B cell (primary cell): ENCODE measurements at regions of chr15 and their contacts with region 1.

Region 1: GRCh38 chr15:40982855-40983254 is 29.6 kb downstream of the CHAC1 start:
- DNase-seq: no peak
- ATAC-seq: no peak
- H3K4me3 ChIP-seq: no peak overlapping the region
- H3K4me3 Mint-ChIP-seq: no peak overlapping the region
- H3K27ac ChIP-seq: no peak overlapping the region
- H3K27ac Mint-ChIP-seq: no peak overlapping the region
- H3K4me1 ChIP-seq: no peaks in the 10 kb centered on the region
- H3K4me1 Mint-ChIP-seq: no peaks in the 10 kb centered on the region
- H3K27me3 ChIP-seq: no peaks in the 10 kb centered on the region
- H3K27me3 Mint-ChIP-seq: no peaks in the 10 kb centered on the region
- CTCF ChIP-seq: no peak

Region 2: DNA sequence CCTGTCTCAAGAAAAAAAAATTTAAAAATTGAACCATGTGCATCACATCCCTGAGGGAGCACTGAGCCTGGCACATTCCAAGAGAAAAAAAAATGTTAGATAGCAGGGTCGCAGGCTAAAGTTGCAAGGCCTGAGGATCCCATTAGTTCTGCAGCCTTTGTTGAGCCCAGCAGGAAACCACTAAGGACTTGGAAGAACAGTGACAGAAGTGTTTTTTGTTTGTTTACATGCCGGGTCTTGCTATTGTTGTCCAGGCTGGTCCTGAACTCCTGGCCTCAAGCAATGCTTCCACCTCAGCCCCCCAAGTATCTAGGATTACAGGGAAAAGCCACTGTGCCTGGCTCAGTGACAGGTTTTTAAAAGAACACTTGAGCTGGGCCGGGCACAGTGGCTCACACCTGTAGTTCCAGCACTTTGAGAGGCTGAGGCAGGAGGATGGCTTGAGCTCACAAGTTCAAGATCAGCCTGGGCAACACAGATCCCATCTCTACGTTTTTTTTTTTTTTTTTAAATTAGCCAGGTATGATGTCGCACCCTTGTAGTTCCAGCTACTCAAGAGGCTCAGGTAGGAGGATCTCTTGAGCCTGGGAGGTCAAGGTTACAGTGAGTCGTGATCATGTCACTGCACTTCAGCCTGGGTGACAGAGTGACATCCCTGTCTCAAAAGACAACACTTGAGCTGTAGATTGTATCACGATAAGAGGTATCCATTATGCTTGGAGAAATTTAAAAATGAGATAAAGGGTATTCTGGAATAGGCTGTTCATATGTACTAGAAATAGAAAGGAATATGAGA is 14.4 kb before region 1 on chr15:
- CTCF ChIA-PET with region 1: no interaction called
- POLR2A ChIA-PET with region 1: no interaction called
- intact Hi-C with region 1: loop called (anchors 2 kb)
- DNase-seq: no peak
- ATAC-seq: no peak
- H3K4me3 ChIP-seq: no peak overlapping the region
- H3K4me3 Mint-ChIP-seq: no peak overlapping the region
- H3K27ac ChIP-seq: no peak overlapping the region
- H3K27ac Mint-ChIP-seq: no peak overlapping the region
- H3K4me1 ChIP-seq: no peaks in the 10 kb centered on the region
- H3K4me1 Mint-ChIP-seq: no peaks in the 10 kb centered on the region
- H3K27me3 ChIP-seq: peaks cover 0 to 3% (median 0%) of the 10 kb centered on the region in 4 experiments
- H3K27me3 Mint-ChIP-seq: peaks cover 4% of the 10 kb centered on the region
- CTCF ChIP-seq: no peak

Region 3: DNA sequence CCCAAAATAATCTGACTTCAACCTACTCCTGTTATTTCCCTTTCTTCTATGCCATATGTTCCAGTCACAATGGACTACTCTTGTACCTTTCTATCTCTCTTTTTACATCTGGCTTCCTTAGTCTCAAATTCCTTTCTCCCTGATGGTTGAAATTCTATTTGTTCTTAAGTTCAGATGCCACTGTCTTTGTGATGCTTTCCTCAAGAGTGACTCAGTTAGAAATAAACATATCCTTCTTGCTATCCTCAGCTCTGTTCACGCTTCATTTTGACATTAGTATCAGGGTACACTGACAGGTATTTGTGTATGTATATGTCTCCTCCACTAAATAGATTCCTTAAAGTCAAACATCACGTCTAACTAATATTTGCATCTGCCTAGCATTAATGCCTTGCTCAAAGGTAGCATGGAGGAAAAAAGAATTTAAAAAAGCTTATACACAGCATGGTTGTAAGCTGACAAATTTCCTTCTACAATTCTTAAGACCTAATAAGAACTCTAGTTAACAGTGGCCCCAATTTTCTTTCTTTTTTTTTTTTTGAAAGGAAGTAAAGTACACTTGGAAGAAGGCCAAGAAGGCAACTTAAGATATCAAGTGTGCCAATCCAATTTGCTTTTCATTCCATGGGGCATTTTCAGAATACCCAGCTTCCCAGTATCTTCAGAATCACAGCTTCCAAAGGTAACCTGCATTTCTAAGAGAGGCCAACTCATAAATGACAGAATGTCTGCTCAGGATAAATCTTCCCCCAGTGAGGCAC is 28.4 kb after region 1 on chr15:
- CTCF ChIA-PET with region 1: no interaction called
- POLR2A ChIA-PET with region 1: no interaction called
- intact Hi-C with region 1: no loop called
- DNase-seq: no peak
- ATAC-seq: no peak
- H3K4me3 ChIP-seq: no peak overlapping the region
- H3K4me3 Mint-ChIP-seq: no peak overlapping the region
- H3K27ac ChIP-seq: no peak overlapping the region
- H3K27ac Mint-ChIP-seq: no peak overlapping the region
- H3K4me1 ChIP-seq: peaks cover 9% of the 10 kb centered on the region in 2 donors
- H3K4me1 Mint-ChIP-seq: peaks cover 16% of the 10 kb centered on the region
- H3K27me3 ChIP-seq: no peaks in the 10 kb centered on the region
- H3K27me3 Mint-ChIP-seq: no peaks in the 10 kb centered on the region
- CTCF ChIP-seq: no peak